Sigmoid colon (tissue), 7 donors: ENCODE measurements at regions of chr4 and their contacts with region 1.

Region 1: GRCh38 chr4:184538023-184538599 is 63.8 kb upstream of the IRF2 start:
- DNase-seq: peak; percentile 96
- H3K4me3 ChIP-seq: peak overlapping the region; percentile 60 to 66 (median 64)
- H3K27ac ChIP-seq: peak overlapping the region; percentile 90 to 97 (median 92)
- H3K4me1 ChIP-seq: peaks cover 0 to 28% (median 21%) of the 10 kb centered on the region in 4 donors
- H3K27me3 ChIP-seq: no peaks in the 10 kb centered on the region
- CTCF ChIP-seq: peak; percentile 67 to 88 (median 79)
- EP300 ChIP-seq: no peak
- POLR2A ChIP-seq: no peak

Region 2: DNA sequence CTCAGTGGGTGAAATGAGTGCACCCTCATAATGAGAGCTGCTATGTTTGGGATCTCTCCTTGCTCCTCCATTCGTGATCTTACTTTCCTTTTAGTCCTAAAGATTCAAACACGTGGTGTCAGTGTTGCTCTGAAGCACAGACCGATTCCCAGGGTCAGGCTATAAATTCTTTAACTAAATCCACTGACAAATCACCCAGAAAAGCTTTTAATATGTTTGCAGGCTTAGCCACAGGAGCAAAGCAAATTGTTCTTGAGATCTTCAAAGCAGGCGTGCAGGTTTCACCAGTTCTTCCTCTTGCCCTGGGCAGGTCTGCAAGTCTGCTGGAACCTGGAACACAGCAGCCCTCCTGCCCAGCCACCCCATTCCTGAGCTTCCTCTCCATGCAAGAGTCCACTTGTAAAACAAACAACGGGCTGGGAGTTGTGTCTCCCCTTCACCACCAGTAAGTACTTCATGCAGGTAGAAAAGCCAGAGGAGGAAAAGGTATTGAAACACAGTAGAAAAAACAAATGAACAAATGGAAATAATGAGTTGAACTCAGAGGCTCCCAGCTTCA is 250.3 kb before region 1 on chr4:
- intact Hi-C with region 1: loop called (anchors 1 kb)
- DNase-seq: no peak
- H3K4me3 ChIP-seq: no peak overlapping the region
- H3K27ac ChIP-seq: peak overlapping the region in 2 of 4 donors; percentile 7 to 8
- H3K4me1 ChIP-seq: peaks cover 0 to 10% (median 2%) of the 10 kb centered on the region in 4 donors
- H3K27me3 ChIP-seq: no peaks in the 10 kb centered on the region
- CTCF ChIP-seq: peak in 2 of 4 experiments; percentile 30
- EP300 ChIP-seq: no peak
- POLR2A ChIP-seq: no peak

Region 3: DNA sequence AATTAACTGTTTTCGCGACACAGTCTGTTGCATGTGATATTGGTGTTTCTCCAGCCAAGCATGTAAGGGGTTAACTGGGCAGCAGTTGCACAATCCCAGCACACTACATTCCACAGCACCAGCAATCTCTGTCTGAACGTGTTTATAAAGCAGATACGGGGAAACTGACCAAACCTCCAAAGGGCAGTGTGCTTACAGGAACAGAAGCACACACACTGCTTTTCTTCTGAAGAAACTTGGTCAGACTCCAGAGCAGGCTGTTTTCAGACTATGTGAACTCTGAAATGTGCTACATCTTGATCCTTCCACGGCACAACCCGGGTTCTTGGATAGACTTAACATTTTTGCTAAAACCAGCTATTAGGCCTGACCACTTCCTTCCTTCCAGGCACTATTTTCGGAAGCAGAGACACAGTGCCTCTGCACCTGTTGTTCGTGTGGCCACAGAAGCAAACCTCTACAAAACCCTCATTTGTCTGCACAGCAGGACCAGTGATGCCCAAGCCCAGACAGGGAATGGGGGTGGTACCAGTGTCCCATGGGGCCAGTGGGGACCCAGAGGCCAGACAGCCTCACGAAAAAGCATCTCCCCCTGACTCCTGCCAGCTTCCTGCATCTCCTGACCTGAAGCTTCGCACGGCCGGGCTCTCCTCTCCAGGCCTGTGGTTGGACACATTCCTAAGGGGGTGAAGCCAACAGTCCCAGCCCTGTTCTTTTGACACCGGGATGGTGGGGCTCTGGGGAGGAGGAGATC is 153.9 kb before region 1 on chr4:
- intact Hi-C with region 1: loop called (anchors 5 kb)
- DNase-seq: peak; percentile 79
- H3K4me3 ChIP-seq: peak overlapping the region; percentile 11 to 36 (median 30)
- H3K27ac ChIP-seq: peak overlapping the region; percentile 79 to 84 (median 80)
- H3K4me1 ChIP-seq: peaks cover 0 to 50% (median 47%) of the 10 kb centered on the region in 4 donors
- H3K27me3 ChIP-seq: no peaks in the 10 kb centered on the region
- CTCF ChIP-seq: no peak
- EP300 ChIP-seq: no peak
- POLR2A ChIP-seq: no peak

Region 4: DNA sequence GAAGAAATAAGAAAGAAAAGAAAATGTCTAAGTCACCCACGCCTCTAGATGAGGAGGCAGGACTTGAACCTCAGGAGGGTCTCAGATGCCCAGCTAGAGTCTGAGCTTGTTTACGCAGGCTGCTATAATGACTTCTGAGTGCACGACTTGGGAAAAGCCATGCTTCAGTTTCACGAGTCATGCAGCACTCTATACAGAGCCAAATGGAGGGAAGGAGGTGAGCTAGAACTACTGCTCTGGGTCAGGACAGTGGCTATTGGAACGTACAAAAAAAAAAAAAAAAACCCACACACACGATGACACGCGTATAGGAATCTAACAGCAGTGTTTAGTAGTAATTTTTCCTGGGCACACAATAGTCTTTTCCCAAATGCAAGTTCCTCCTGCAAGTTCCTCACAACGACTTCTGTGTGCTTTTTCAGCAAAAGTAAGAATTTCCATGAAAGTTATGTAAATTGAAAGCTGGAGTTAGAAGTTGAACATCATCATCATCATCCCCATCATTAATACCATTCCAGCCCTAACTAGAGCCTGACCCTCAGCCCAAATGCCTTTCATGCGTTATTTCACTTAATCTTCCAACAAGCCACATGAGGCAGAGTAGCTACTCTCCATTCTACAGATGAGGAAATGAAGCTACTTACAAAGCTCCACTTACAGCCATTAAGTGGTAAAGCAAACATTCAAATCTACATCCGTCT is 100.4 kb before region 1 on chr4:
- intact Hi-C with region 1: no loop called
- DNase-seq: no peak
- H3K4me3 ChIP-seq: no peak overlapping the region
- H3K27ac ChIP-seq: no peak overlapping the region
- H3K4me1 ChIP-seq: peaks cover 0 to 70% (median 45%) of the 10 kb centered on the region in 4 donors
- H3K27me3 ChIP-seq: no peaks in the 10 kb centered on the region
- CTCF ChIP-seq: no peak
- EP300 ChIP-seq: no peak
- POLR2A ChIP-seq: no peak

Region 5: GRCh38 chr4:184487513-184487912 is 50.6 kb before region 1 on chr4:
- intact Hi-C with region 1: no loop called
- DNase-seq: no peak
- H3K4me3 ChIP-seq: no peak overlapping the region
- H3K27ac ChIP-seq: no peak overlapping the region
- H3K4me1 ChIP-seq: no peaks in the 10 kb centered on the region
- H3K27me3 ChIP-seq: no peaks in the 10 kb centered on the region
- CTCF ChIP-seq: no peak
- EP300 ChIP-seq: no peak
- POLR2A ChIP-seq: no peak

Region 6: GRCh38 chr4:184599492-184600135 is 61.5 kb after region 1 on chr4:
- intact Hi-C with region 1: no loop called
- DNase-seq: no peak
- H3K4me3 ChIP-seq: no peak overlapping the region
- H3K27ac ChIP-seq: no peak overlapping the region
- H3K4me1 ChIP-seq: no peaks in the 10 kb centered on the region
- H3K27me3 ChIP-seq: peaks cover 0 to 2% (median 0%) of the 10 kb centered on the region in 3 donors
- CTCF ChIP-seq: no peak
- EP300 ChIP-seq: no peak
- POLR2A ChIP-seq: no peak

Region 7: GRCh38 chr4:184649026-184649970 is 111.2 kb after region 1 on chr4 and contains the starts of genes CASP3 and PRIMPOL:
- intact Hi-C with region 1: loop called (anchors 1 kb)
- DNase-seq: peak; percentile 98
- H3K4me3 ChIP-seq: peak within 1 kb of the TSS; percentile 78 to 87 (median 86)
- H3K27ac ChIP-seq: peak within 1 kb of the TSS; percentile 94 to 100 (median 97)
- H3K4me1 ChIP-seq: peaks cover 0 to 49% (median 34%) of the 10 kb centered on the region in 4 donors
- H3K27me3 ChIP-seq: no peaks in the 10 kb centered on the region
- CTCF ChIP-seq: peak in 1 of 4 experiments; percentile 17
- EP300 ChIP-seq: no peak
- POLR2A ChIP-seq: peak; percentile 82 to 83
- total RNA-seq, gene CASP3: 9.4 to 20.3 (median 17.7) TPM
- total RNA-seq, gene PRIMPOL: 18.7 to 32.1 (median 29.9) TPM

Region 8: DNA sequence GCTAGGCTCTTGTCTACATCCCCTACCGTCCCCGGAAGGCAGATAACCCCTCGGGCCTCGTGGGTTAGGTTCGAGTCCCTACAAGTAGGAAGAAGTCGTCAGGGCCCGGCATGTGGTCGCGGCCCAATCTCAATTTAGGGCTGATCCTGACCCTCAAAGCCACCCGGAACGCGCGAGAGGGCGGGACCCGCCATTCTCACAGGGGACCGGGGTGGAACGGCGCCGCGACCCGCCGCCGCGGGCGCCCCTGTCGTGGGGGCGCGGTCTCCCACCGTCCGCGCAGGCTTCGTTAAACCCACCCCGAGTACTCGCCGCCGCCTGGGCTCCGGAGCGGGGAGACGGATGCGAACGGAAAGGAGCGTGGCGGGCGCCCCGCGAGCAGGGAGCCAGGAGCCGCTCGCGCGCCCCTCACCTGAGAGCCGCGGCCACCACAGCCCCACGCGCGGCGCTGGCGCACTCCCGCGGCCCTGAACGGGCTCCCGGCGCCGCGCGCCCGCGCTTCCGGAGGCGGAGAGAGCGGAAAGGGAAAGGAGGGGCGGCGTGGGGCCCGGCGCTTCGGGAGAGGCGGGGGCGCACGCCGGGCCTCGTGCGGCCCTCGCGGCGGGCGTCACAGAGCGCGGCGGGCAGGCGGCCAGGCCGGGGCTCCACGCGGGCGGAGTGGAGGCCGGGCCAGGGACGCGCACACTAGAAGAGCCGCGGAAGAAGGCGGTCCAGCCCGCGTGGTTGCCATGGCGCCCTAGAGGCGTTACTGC is 665.6 kb after region 1 on chr4 and contains the start of gene CFAP97:
- intact Hi-C with region 1: loop called (anchors 10 kb)
- DNase-seq: peak; percentile 96
- H3K4me3 ChIP-seq: peak within 1 kb of the TSS; percentile 50 to 85 (median 72)
- H3K27ac ChIP-seq: peak within 1 kb of the TSS; percentile 94 to 98 (median 96)
- H3K4me1 ChIP-seq: peaks cover 0 to 29% (median 26%) of the 10 kb centered on the region in 4 donors
- H3K27me3 ChIP-seq: no peaks in the 10 kb centered on the region
- CTCF ChIP-seq: no peak
- EP300 ChIP-seq: no peak
- POLR2A ChIP-seq: peak in 1 of 2 donors; percentile 15
- total RNA-seq, gene CFAP97: 33.8 to 46.4 (median 37.3) TPM